T-cell (primary cell): ENCODE measurements at regions of chr11 and their contacts with region 1.

Region 1: DNA sequence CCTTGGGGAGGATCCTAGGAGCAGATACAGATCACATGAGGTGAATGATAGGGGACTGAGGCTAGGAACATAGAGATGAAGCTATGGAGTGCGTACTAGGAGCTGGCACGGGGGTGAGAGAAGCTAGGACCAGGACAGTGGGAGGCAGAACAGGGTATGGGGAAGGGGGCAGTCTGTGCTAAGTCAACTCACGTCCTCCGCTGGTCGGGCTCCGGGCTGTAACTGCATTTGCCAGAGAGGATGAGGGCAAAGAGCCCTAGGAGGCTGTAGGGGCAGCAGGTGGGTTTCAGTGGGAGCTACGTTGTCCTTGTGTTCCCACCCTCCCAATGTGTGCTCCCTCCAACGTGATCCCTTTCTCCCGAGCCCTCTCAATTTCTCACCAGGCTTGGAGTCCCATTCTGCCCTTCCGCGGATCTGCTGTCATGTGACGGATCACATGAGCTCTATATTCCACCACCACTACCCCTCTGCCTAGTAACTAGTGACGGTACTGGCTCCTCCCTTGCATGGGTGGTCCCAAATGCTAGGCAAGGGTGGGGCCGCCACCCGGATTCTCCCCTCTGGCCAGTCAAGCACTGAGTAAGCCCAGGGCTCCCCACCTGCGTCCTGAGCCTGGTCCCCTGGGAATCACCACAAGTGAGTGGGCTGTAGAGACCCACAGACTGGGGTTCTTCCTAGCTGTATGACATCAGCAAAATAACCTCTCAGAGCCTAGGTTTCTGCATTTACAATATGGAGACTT is at the start of gene TPP1:
- DNase-seq: peak; percentile 79 to 94 (median 87)
- ATAC-seq: peak; percentile 90 to 98 (median 90)
- H3K4me3 ChIP-seq: peak within 1 kb of the TSS; percentile 66 to 98
- H3K4me3 Mint-ChIP-seq: no peak within 1 kb of the TSS
- H3K27ac ChIP-seq: peak within 1 kb of the TSS; percentile 57
- H3K27ac Mint-ChIP-seq: no peak within 1 kb of the TSS
- H3K4me1 ChIP-seq: peaks cover 10 to 31% of the 10 kb centered on the region in 2 experiments
- H3K4me1 Mint-ChIP-seq: peaks cover 4 to 14% (median 12%) of the 10 kb centered on the region in 3 donors
- H3K27me3 ChIP-seq: no peaks in the 10 kb centered on the region
- H3K27me3 Mint-ChIP-seq: no peaks in the 10 kb centered on the region
- total RNA-seq, gene TPP1: 67.4 to 168 (median 132) TPM

Region 2: GRCh38 chr11:5197536-5197935 is 1421.6 kb before region 1 on chr11:
- CTCF ChIA-PET with region 1: no interaction called
- POLR2A ChIA-PET with region 1: no interaction called
- DNase-seq: no peak
- ATAC-seq: no peak
- H3K4me3 ChIP-seq: no peak overlapping the region
- H3K4me3 Mint-ChIP-seq: no peak overlapping the region
- H3K27ac ChIP-seq: no peak overlapping the region
- H3K27ac Mint-ChIP-seq: no peak overlapping the region
- H3K4me1 ChIP-seq: no peaks in the 10 kb centered on the region
- H3K4me1 Mint-ChIP-seq: no peaks in the 10 kb centered on the region
- H3K27me3 ChIP-seq: no peaks in the 10 kb centered on the region
- H3K27me3 Mint-ChIP-seq: peaks cover 0 to 5% of the 10 kb centered on the region in 2 donors

Region 3: DNA sequence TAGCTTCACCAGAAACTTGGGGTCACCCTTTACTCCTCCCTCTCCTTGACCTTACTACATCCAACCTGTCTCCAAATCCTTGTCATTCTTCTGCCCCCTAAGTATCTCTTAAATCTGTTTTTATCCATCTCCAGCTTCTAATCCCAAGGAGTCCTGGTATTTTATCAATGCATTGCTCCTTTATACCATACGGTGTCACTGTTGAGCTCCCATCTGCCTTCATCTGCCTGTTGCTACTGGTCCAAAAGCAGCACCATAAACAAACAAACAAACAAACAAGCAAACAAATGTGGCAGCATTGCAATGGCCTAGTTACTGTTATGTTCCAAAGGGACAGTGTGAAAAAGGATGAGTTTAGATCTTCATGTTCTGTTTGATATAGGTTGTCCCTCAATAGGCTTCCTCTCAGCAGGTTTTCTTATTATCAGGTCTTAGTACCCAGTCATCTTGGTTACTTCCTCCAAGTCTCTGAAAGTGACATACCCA is 87.9 kb before region 1 on chr11:
- CTCF ChIA-PET with region 1: interaction called in 1 of 2 experiments, 12 read pairs
- POLR2A ChIA-PET with region 1: no interaction called
- DNase-seq: peak in 7 of 35 experiments; percentile 3 to 69 (median 12)
- ATAC-seq: peak in 3 of 4 experiments; percentile 47 to 59 (median 57)
- H3K4me3 ChIP-seq: no peak overlapping the region
- H3K4me3 Mint-ChIP-seq: no peak overlapping the region
- H3K27ac ChIP-seq: no peak overlapping the region
- H3K27ac Mint-ChIP-seq: no peak overlapping the region
- H3K4me1 ChIP-seq: peaks cover 1 to 3% of the 10 kb centered on the region in 2 experiments
- H3K4me1 Mint-ChIP-seq: peaks cover 7 to 13% (median 12%) of the 10 kb centered on the region in 3 donors
- H3K27me3 ChIP-seq: no peaks in the 10 kb centered on the region
- H3K27me3 Mint-ChIP-seq: no peaks in the 10 kb centered on the region

Region 4: DNA sequence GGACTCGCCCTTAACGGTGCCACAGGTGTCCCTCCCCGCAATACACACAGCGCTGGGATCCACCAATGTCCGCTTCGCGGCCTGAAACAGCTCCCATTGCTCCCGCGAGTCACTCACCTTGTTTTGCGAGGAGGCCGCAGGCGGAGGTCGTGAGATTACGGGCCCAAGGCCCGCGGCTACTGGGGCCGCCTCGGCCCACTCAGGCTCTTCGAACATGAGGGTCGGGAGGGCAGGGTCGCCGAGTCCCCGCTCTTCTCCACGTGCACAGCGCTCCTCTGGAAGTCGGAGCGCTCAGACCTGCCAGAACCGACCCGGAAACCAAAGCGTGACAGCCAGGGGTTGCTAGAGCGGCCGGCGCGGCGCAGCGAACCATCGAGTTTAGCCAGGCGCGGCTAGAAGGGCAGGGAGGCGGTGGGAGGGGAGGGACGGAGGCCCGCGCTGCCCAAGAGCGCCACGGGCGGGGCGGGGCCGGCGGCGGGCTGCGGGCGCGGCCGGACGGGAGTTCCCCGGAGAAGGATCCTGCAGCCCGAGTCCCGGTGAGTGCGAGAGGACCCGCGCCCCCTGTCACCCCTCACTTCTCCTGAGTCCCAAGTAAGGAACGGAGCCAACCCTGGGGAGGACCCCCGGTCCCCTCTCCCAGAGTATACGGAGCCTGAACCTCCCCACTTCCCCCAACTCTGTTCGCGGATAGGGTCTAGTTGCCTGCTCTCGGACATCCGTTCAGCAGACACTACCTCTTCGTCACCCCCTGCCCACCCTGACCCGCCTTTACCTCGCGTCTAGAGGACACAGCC is 15.7 kb before region 1 on chr11 and contains the starts of genes ILK and RRP8:
- CTCF ChIA-PET with region 1: interaction called, 6 to 37 read pairs
- POLR2A ChIA-PET with region 1: interaction called, 4 to 16 read pairs
- DNase-seq: peak; percentile 66 to 90 (median 74)
- ATAC-seq: peak; percentile 84 to 90 (median 88)
- H3K4me3 ChIP-seq: peak within 1 kb of the TSS; percentile 81 to 96
- H3K4me3 Mint-ChIP-seq: no peak within 1 kb of the TSS
- H3K27ac ChIP-seq: peak within 1 kb of the TSS; percentile 72
- H3K27ac Mint-ChIP-seq: no peak within 1 kb of the TSS
- H3K4me1 ChIP-seq: peaks cover 38 to 66% of the 10 kb centered on the region in 2 experiments
- H3K4me1 Mint-ChIP-seq: peaks cover 13 to 25% (median 21%) of the 10 kb centered on the region in 3 donors
- H3K27me3 ChIP-seq: no peaks in the 10 kb centered on the region
- H3K27me3 Mint-ChIP-seq: no peaks in the 10 kb centered on the region
- total RNA-seq, gene ILK: 49.3 to 111 (median 99.4) TPM
- total RNA-seq, gene RRP8: 24.5 to 35.5 (median 32.2) TPM

Region 5: GRCh38 chr11:6667733-6668374 is 48.7 kb after region 1 on chr11:
- CTCF ChIA-PET with region 1: interaction called, 3 to 24 read pairs
- POLR2A ChIA-PET with region 1: interaction called in 1 of 2 experiments, 13 read pairs
- DNase-seq: peak in 11 of 35 experiments; percentile 12 to 72 (median 26)
- ATAC-seq: peak; percentile 60 to 84 (median 68)
- H3K4me3 ChIP-seq: no peak overlapping the region
- H3K4me3 Mint-ChIP-seq: no peak overlapping the region
- H3K27ac ChIP-seq: peak overlapping the region; percentile 46
- H3K27ac Mint-ChIP-seq: peak overlapping the region; percentile 74 to 81
- H3K4me1 ChIP-seq: peaks cover 22 to 24% of the 10 kb centered on the region in 2 experiments
- H3K4me1 Mint-ChIP-seq: peaks cover 62 to 75% (median 64%) of the 10 kb centered on the region in 3 donors
- H3K27me3 ChIP-seq: no peaks in the 10 kb centered on the region
- H3K27me3 Mint-ChIP-seq: no peaks in the 10 kb centered on the region

Region 6: GRCh38 chr11:6719576-6719975 is 100.4 kb after region 1 on chr11:
- CTCF ChIA-PET with region 1: no interaction called
- POLR2A ChIA-PET with region 1: no interaction called
- DNase-seq: no peak
- ATAC-seq: no peak
- H3K4me3 ChIP-seq: no peak overlapping the region
- H3K4me3 Mint-ChIP-seq: peak overlapping the region in 1 of 3 donors; percentile 19
- H3K27ac ChIP-seq: no peak overlapping the region
- H3K27ac Mint-ChIP-seq: peak overlapping the region; percentile 73 to 81
- H3K4me1 ChIP-seq: peaks cover 9 to 47% of the 10 kb centered on the region in 2 experiments
- H3K4me1 Mint-ChIP-seq: peaks cover 59 to 92% (median 86%) of the 10 kb centered on the region in 3 donors
- H3K27me3 ChIP-seq: no peaks in the 10 kb centered on the region
- H3K27me3 Mint-ChIP-seq: no peaks in the 10 kb centered on the region

Region 7: DNA sequence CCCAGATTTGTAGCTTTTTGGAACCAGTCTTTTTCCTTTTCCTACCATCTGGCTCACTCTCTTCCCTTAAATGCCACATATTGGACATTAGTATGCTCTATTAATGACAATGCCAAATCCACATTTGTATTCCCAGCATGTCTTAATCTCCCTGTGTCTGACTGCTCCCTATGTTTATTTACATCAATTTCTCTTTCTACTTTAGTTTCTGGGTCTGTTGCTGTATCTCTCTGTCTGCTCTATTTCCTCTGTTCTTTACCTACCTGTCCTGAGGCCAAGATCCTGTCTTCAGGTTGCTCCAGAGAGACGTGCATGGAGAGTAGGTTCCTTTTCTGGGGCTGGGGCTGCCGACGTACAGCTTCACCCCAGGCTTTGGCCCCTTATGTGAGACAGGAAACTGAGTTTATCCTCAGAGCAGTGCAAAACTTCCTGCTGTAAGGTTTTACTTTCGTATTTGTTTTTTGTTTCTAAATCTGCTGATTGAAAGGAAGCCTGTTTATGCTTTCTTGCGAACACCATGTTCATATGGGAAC is 127.0 kb after region 1 on chr11:
- CTCF ChIA-PET with region 1: no interaction called
- POLR2A ChIA-PET with region 1: no interaction called
- DNase-seq: peak; percentile 10 to 75 (median 41)
- ATAC-seq: peak; percentile 79 to 89 (median 84)
- H3K4me3 ChIP-seq: peak overlapping the region; percentile 65 to 67
- H3K4me3 Mint-ChIP-seq: no peak overlapping the region
- H3K27ac ChIP-seq: peak overlapping the region; percentile 90
- H3K27ac Mint-ChIP-seq: no peak overlapping the region
- H3K4me1 ChIP-seq: peaks cover 11 to 51% of the 10 kb centered on the region in 2 experiments
- H3K4me1 Mint-ChIP-seq: peaks cover 6 to 24% (median 19%) of the 10 kb centered on the region in 3 donors
- H3K27me3 ChIP-seq: no peaks in the 10 kb centered on the region
- H3K27me3 Mint-ChIP-seq: no peaks in the 10 kb centered on the region

Region 8: DNA sequence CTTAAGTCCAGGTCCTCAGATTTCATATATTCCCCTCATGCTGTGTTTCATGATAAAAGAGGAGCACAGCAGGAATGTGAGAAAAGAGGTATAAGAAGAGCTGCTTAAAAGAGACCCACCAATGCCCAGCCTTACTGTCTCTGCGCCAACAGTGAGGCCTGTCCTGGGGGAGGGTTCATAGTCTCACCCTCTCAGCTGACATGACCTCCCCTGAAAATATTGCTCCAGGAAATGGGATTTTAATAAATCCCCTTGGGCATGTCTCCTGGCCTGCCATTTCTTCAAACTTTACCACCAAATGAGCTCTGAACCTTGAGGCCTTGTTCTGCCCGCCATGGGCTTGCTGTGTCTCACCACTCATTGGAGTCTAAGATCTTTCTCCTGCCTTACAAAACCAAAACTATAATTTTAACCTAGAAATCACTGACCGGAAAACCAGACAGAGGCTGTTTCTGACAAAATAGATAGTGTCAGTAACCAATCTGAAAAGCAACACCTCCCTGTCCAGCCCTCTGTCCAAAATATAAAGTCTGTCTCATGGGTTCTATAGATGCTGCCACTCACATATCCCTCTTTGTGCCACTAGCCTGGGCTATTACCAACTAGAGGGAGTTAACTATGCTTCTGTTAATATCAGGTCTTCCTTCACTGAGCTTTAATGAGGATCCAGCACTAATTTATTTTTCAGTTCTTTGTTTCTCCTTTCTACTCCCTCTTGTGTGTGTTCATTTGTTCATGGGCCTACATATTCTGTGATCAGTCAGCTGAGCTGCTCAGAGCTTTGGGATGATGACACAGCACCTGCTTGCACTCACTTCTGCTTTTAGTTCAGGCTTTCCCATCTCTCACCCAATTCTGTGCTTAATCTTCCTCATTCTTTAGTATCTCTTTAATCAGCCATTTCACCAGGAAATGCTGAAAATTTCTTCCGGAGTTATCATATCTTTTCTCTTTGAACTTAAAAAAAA is 153.0 kb after region 1 on chr11 and contains the start of gene OR2AG2:
- CTCF ChIA-PET with region 1: no interaction called
- POLR2A ChIA-PET with region 1: no interaction called
- DNase-seq: no peak
- ATAC-seq: no peak
- H3K4me3 ChIP-seq: no peak within 1 kb of the TSS
- H3K4me3 Mint-ChIP-seq: no peak within 1 kb of the TSS
- H3K27ac ChIP-seq: no peak within 1 kb of the TSS
- H3K27ac Mint-ChIP-seq: no peak within 1 kb of the TSS
- H3K4me1 ChIP-seq: no peaks in the 10 kb centered on the region
- H3K4me1 Mint-ChIP-seq: peaks cover 3 to 7% (median 4%) of the 10 kb centered on the region in 3 donors
- H3K27me3 ChIP-seq: no peaks in the 10 kb centered on the region
- H3K27me3 Mint-ChIP-seq: peaks cover 2 to 3% of the 10 kb centered on the region in 2 donors
- total RNA-seq, gene OR2AG2: not detected